Head of caudate nucleus (tissue), 42 donors: ENCODE measurements at regions of chr20 and their contacts with region 1.

Region 1: DNA sequence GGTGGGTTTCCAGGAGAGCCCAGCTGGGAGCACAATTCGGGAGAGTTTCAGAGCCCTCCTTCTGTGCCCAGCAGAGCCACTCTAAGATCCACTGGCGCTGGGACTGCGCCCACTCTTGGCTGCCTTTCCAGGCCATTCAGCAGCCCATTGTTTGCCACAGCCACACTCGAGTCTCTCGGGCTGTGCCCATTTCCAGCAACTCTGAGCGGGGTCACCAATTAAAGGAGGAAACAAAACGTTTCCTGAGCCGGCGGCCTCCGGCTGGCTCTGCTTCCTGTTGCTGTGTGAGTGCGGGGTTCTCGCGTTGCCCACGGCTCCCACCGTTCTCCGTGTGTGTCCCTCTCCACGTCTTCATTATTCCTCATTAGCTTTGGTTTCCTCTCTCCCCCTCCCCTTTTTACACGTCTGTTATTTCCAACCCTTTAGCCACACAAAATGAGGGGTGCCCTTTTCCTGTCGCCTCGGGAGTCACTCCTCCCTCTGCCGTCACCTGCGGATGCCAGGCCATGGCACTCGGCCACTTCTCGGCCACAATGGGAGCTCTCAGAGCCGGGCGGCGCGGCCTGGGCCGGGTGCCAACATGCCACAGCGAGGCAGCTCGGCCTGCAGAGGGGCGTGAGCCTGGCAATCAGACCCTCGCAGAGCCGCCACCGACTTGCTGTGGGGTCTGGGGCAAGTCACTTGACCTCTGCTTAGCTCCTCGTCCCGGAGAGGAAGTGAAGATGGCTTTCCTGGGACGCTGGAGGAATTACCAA is 94.3 kb upstream of the NKX2-2 start:
- DNase-seq: peak; percentile 80 to 97 (median 93)

Region 2: DNA sequence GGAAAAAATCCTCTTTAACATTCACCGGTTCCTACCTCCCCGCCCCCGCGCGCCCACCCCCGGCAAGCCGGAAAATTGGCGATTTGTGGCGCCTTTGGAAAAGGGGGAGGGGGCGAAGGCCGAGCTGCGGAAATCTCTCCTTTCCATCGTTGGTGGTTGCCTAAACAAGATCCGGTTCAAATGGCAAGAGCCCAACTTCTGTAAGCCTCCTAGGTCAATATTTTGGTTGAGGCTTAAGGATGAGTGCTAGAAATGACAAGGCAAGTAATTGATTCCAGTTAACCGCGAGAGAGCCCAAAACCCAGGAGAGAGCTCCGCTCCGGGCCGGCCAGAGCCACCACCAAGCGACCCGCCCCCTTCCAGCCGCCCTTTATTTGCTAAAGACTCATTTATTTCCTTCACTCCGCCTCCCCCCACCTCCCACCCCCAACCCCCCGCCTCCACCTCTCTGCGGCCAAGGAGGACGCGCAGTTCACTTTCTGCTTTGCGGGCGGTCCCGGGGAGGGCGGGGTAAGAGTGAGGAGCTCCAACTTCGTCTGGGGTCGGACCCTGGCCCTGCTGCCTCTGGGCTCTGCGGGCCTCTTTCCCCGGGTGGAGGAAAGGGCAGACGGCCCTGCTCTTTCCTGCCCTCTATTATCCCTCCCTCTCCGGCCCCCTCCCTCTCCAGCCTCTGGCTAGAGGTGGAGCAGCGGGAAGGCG is 93.4 kb before region 1 on chr20:
- intact Hi-C with region 1: loop called (anchors 5 kb)
- DNase-seq: peak in 20 of 42 donors; percentile 22 to 78 (median 52)